ENCODE measurements at regions of chr1 and their contacts with region 1.

Region 1: DNA sequence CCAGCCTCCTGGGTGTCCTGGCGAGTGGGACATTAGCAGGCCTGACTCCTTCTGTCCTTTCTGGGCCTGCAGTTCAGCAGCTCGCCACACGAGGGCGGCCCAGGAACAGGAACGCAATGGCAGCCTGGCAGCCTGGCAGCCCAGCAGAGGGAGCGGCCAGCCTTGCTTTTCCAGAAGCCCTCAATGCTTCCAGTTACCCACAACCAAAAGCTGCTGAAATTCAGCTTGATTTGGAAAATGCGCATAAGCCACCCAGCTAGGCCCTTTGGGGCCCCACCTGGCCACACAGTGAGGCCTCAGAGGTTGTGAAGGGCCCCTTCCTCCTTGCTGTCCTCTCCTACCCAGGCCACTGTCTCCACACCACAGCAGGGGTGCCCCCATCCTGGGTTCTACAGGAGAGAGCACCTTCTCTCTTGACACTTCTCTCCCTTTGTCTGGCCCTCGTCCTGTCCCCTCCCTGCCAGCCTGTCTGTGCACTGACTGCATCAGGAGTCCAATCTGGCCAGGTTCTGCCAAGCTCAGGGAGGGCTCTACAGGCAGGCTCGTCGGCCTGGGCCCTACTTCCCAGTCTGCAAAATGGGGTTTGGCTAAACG is 103.4 kb upstream of the VAMP3 start:
- DNase-seq: peak; percentile 90 to 92
- H3K4me3 ChIP-seq: no peak overlapping the region
- H3K27ac ChIP-seq: no peak overlapping the region
- H3K4me1 ChIP-seq: peaks cover 0 to 10% of the 10 kb centered on the region in 2 donors
- H3K27me3 ChIP-seq: no peaks in the 10 kb centered on the region
- CTCF ChIP-seq: peak; percentile 99 to 100 (median 100)
- POLR2A ChIP-seq: no peak

Region 2: GRCh38 chr1:7752512-7753417 is 85.0 kb after region 1 on chr1:
- intact Hi-C with region 1: loop called (anchors 2 kb)
- DNase-seq: peak; percentile 71 to 78
- H3K4me3 ChIP-seq: no peak overlapping the region
- H3K27ac ChIP-seq: no peak overlapping the region
- H3K4me1 ChIP-seq: peaks cover 0 to 5% of the 10 kb centered on the region in 2 donors
- H3K27me3 ChIP-seq: no peaks in the 10 kb centered on the region
- CTCF ChIP-seq: peak; percentile 59 to 80 (median 71)
- POLR2A ChIP-seq: no peak

Region 3: DNA sequence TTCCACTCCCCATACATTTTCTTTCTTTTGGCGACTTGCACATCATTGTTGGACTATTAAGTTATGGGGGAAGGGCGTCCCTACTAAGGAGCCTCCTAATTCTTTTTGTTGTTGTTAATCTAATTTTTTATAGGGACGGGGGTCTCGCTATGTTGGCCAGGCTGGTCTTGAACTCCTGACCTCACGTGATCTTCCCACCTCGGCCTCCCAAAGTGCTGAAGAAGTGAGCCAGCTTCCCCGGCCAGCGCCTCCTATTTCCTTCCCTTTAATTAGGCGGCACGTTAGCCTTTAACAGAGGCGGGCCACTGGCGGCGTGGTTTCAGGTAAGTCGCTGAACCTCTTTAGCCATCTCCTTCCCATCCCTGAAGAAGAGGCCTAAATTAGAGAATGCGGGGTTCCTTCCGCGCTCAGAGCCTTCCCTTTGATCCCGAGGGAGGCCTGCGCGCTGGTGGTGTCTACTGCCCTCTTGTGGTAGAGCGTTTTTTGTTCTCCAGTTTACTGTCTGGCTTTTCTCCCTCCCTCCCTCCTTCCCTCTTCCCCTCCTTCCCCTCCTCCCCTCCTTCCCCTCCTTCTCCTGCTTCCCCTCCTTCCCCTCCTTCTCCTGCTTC is 234.9 kb after region 1 on chr1:
- intact Hi-C with region 1: loop called (anchors 10 kb)
- DNase-seq: peak; percentile 50 to 55
- H3K4me3 ChIP-seq: no peak overlapping the region
- H3K27ac ChIP-seq: no peak overlapping the region
- H3K4me1 ChIP-seq: no peaks in the 10 kb centered on the region
- H3K27me3 ChIP-seq: no peaks in the 10 kb centered on the region
- CTCF ChIP-seq: peak in 5 of 6 experiments; percentile 41 to 73 (median 58)
- POLR2A ChIP-seq: no peak